ENCODE measurements at regions of chr17 and their contacts with region 1.

Region 1: DNA sequence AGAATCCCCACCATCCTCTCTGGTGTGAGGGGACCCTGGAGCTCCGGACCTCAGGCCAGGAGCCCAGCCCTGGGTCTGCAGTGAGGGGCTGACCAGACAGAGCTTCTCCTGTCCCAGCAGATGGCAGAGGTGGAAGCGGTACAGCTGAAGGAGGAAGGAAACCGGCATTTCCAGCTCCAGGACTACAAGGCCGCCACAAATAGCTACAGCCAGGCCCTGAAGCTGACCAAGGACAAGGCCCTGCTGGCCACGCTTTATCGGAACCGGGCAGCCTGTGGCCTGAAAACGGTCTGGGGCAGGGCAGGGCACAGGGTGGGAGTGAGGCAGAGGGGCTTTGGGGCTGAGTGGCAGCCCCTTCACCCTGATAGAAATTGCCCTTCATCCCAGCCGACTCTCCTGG is 527 bp downstream of the UNC45B start:
- DNase-seq: no peak
- ATAC-seq: peak in 1 of 2 experiments; percentile 22; a peak in 2 of 6 replicates
- H3K4me3 ChIP-seq: no peak overlapping the region
- H3K27ac ChIP-seq: no peak overlapping the region
- H3K4me1 ChIP-seq: no peaks in the 10 kb centered on the region
- CTCF ChIP-seq: no peak
- EP300 ChIP-seq: no peak
- POLR2A ChIP-seq: no peak
- RAD21 ChIP-seq: no peak

Region 2: DNA sequence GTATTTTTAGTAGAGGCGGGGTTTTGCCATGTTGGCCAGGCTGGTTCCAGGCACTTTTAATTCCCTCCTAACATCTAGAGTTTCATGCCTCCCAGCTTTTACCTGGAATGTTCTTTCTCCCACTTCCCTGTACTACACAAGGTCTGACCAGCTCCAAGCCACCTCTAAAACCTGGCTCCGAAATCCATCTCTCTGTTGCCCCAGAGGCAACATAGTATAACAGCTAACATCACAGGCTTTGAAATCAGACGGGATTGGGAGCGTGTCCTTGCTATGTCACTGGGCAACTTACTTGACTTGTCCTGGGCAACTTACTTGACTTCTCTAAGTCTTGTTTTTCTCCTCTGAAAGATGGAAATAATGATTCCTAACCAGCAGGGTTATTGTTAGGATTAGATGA is 14.6 kb after region 1 on chr17:
- CTCF ChIA-PET with region 1: interaction called, 11 read pairs
- POLR2A ChIA-PET with region 1: interaction called, 3 read pairs
- DNase-seq: no peak
- ATAC-seq: no peak
- H3K4me3 ChIP-seq: no peak overlapping the region
- H3K27ac ChIP-seq: no peak overlapping the region
- H3K4me1 ChIP-seq: no peaks in the 10 kb centered on the region
- CTCF ChIP-seq: no peak
- EP300 ChIP-seq: no peak
- POLR2A ChIP-seq: no peak
- RAD21 ChIP-seq: no peak

Region 3: DNA sequence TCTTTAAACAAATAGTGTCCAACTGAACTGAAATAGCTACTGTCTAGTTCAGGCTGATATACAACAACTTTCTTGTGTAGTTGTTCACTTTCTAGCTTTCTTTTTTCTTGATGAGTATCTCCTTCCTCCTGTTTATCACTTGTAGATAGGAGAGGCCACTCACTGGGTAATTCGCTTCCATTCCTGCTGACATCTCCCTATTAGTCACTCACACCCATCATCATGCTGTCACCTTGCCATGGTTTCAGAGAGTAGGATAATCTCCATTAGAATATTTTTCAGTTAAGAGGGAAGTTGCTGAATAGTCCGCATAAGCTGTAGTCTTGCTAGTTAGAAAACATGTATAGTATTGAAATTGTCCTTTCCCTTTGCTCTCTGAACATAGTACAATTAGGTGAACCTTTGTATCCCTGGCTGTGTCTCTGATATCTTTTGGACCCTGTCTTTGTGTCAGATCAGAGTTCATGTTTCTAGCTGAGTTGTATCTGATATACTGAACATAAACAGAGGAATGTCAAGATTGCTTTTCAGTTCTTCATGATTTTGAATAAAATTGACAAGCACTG is 518.9 kb after region 1 on chr17:
- CTCF ChIA-PET with region 1: no interaction called
- POLR2A ChIA-PET with region 1: no interaction called
- DNase-seq: no peak
- ATAC-seq: no peak
- H3K4me3 ChIP-seq: no peak overlapping the region
- H3K27ac ChIP-seq: no peak overlapping the region
- H3K4me1 ChIP-seq: no peaks in the 10 kb centered on the region
- CTCF ChIP-seq: no peak
- EP300 ChIP-seq: no peak
- POLR2A ChIP-seq: no peak
- RAD21 ChIP-seq: no peak